ENCODE measurements at regions of chr2 and their contacts with region 1.

Region 1: DNA sequence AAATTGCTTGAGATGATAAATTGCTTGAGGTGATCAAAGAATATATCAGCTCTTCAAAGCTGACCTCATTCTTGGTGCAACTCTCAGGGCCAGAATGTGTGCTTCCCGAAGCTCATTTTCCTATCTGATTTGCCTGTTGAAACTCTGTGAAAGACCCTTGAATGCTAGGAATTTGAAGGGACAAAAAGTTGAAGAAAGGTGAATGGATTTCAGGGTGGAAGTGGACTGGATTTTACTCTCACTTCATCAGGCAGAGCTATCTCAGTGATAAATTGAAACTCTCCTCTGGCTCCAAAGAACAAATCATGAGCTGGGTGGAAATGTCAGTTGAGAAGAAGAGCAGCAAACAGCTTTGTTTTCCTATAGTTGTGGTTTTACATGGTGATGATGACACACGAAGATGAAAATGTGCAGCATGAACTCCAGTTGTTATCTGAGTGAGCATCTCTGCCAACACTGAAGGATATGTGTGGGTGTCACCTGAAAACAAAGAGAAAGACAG is 34.4 kb downstream of the CD28 start:
- DNase-seq: peak in 7 of 9 donors; percentile 68 to 94 (median 88)
- ATAC-seq: peak; percentile 93
- H3K4me3 ChIP-seq: no peak overlapping the region
- H3K4me3 Mint-ChIP-seq: peak overlapping the region; percentile 60 to 87 (median 70)
- H3K27ac ChIP-seq: peak overlapping the region; percentile 80
- H3K27ac Mint-ChIP-seq: peak overlapping the region; percentile 79 to 98 (median 96)
- H3K4me1 ChIP-seq: peaks cover 55 to 86% of the 10 kb centered on the region in 2 donors
- H3K4me1 Mint-ChIP-seq: peaks cover 57 to 93% (median 84%) of the 10 kb centered on the region in 7 donors
- H3K27me3 ChIP-seq: no peaks in the 10 kb centered on the region
- H3K27me3 Mint-ChIP-seq: no peaks in the 10 kb centered on the region

Region 2: DNA sequence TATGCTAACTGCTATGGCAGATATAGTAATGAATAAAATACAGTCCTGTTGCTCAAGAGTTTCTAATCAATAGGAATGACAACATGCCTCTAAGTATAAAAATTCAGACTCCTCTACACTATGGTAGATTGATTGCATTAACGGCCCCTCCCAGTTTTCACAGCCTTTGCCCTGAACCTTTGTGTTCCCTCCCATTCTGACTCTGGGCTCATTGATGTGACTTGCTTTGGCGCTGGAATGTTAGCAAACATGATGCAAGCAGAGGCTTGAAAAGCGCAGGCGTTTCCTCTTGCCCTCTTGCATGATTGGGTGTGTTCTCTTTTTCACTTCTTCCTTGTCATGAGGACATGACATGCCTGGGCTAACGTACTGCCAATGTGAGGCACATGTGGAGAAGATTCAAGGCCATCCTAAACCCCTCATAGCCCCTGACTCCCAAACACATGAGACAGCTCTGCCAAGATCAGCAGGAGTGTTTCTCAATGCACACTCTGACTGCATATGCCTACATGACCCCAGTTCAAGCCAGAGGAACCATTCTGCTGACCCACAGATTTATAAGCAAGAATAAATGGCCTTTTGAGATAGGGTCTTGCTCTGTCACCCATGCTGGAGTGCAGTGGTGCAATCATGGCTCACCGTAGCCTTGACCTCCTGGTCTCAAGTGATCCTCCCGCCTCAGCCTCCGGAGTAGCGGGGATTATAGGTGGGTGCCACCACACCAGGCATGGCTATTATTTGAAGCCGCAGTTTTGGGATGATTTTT is 84.1 kb before region 1 on chr2:
- CTCF ChIA-PET with region 1: no interaction called
- POLR2A ChIA-PET with region 1: no interaction called
- intact Hi-C with region 1: loop called in 1 of 2 experiments (anchors 5 kb)
- DNase-seq: peak in 4 of 9 donors; percentile 14 to 20 (median 16)
- ATAC-seq: peak; percentile 88
- H3K4me3 ChIP-seq: no peak overlapping the region
- H3K4me3 Mint-ChIP-seq: peak overlapping the region in 7 of 10 donors; percentile 5 to 76 (median 32)
- H3K27ac ChIP-seq: no peak overlapping the region
- H3K27ac Mint-ChIP-seq: peak overlapping the region in 7 of 9 donors; percentile 21 to 84 (median 63)
- H3K4me1 ChIP-seq: peaks cover 0 to 6% of the 10 kb centered on the region in 2 donors
- H3K4me1 Mint-ChIP-seq: peaks cover 30 to 52% (median 41%) of the 10 kb centered on the region in 7 donors
- H3K27me3 ChIP-seq: no peaks in the 10 kb centered on the region
- H3K27me3 Mint-ChIP-seq: no peaks in the 10 kb centered on the region

Region 3: DNA sequence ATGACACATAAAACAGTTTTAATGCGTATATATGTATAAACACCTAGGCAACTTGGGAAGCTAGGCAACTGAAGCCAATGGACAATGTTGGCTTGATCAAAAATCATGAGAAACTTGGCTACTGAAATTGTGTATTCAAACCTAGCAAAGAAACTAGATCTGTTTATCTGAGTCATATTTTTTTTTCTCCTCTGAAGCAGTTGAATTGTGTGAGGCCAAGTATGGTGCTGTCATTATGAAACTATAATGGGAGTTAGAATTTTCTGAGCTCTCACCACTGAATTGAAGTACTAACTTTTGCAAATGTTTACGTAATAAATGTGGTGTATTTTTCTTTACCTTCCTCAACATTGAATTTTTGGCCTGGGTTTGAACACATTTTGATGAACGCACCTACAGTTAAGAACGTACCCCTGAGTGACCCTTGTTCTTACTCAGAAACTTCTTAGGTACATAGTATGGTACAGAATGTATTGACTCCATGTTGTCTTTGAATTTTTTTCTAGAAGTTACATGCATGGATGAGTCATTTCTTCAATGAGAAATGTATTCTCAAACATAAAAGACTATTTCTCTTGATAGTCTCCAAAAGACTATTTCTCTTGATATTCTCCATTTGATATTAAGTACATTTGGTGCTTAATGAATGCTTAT is 10.6 kb before region 1 on chr2:
- CTCF ChIA-PET with region 1: interaction called, 7 read pairs
- POLR2A ChIA-PET with region 1: interaction called, 108 read pairs
- intact Hi-C with region 1: loop called (anchors 1 kb)
- DNase-seq: no peak
- ATAC-seq: peak; percentile 39
- H3K4me3 ChIP-seq: no peak overlapping the region
- H3K4me3 Mint-ChIP-seq: peak overlapping the region in 9 of 10 donors; percentile 23 to 81 (median 67)
- H3K27ac ChIP-seq: peak overlapping the region; percentile 43
- H3K27ac Mint-ChIP-seq: peak overlapping the region; percentile 86 to 95 (median 90)
- H3K4me1 ChIP-seq: peaks cover 64 to 82% of the 10 kb centered on the region in 2 donors
- H3K4me1 Mint-ChIP-seq: peaks cover 45 to 96% (median 91%) of the 10 kb centered on the region in 7 donors
- H3K27me3 ChIP-seq: no peaks in the 10 kb centered on the region
- H3K27me3 Mint-ChIP-seq: no peaks in the 10 kb centered on the region

Region 4: DNA sequence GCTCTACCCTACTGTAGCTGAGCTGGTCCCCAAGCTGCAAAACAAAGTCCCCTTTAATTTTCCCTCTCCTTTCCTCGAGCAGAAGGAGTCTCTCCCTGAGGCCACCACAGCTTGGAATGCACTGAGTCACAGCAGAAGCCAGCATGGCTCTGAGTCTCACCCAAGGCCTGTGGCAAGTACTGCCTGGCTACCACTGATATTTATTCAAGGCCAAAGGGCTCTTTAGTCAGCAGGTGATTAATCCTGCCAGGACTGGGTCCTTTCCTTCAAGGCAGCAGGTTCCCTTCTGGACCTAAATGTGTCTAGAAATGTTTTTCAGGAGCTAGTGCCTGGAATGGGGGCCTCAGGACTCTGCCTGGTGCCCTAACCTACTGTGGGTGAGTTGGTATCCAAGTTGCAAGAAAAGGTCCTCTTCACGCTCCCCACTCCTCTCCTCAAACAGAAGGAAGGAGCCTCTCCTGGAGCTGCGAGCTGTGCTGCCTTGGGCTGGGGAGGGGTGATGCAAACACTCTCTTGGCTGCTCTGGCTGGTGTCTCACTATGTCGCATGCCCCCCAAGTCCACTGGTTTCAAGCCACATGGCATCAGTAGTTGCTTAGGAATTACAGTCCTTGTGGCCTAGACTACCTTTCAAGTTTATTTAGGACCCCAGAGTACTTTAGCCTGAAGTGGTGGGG is 19.0 kb after region 1 on chr2:
- CTCF ChIA-PET with region 1: interaction called, 4 read pairs
- POLR2A ChIA-PET with region 1: interaction called, 9 read pairs
- intact Hi-C with region 1: loop called (anchors 1 kb)
- DNase-seq: no peak
- ATAC-seq: no peak
- H3K4me3 ChIP-seq: no peak overlapping the region
- H3K4me3 Mint-ChIP-seq: peak overlapping the region in 3 of 10 donors; percentile 5 to 11 (median 8)
- H3K27ac ChIP-seq: no peak overlapping the region
- H3K27ac Mint-ChIP-seq: peak overlapping the region in 5 of 9 donors; percentile 55 to 85 (median 64)
- H3K4me1 ChIP-seq: peaks cover 23 to 37% of the 10 kb centered on the region in 2 donors
- H3K4me1 Mint-ChIP-seq: peaks cover 22 to 75% (median 71%) of the 10 kb centered on the region in 7 donors
- H3K27me3 ChIP-seq: no peaks in the 10 kb centered on the region
- H3K27me3 Mint-ChIP-seq: no peaks in the 10 kb centered on the region

Region 5: GRCh38 chr2:203871371-203871983 is 130.6 kb after region 1 on chr2:
- CTCF ChIA-PET with region 1: interaction called, 3 read pairs
- POLR2A ChIA-PET with region 1: no interaction called
- intact Hi-C with region 1: loop called (anchors 1 to 2 kb)
- DNase-seq: peak in 1 of 9 donors; percentile 45
- ATAC-seq: peak; percentile 30
- H3K4me3 ChIP-seq: no peak overlapping the region
- H3K4me3 Mint-ChIP-seq: peak overlapping the region; percentile 55 to 96 (median 77)
- H3K27ac ChIP-seq: peak overlapping the region; percentile 79
- H3K27ac Mint-ChIP-seq: peak overlapping the region; percentile 48 to 99 (median 92)
- H3K4me1 ChIP-seq: peaks cover 56 to 64% of the 10 kb centered on the region in 2 donors
- H3K4me1 Mint-ChIP-seq: peaks cover 44 to 93% (median 80%) of the 10 kb centered on the region in 7 donors
- H3K27me3 ChIP-seq: no peaks in the 10 kb centered on the region
- H3K27me3 Mint-ChIP-seq: no peaks in the 10 kb centered on the region